ENCODE measurements at regions of chr18 and their contacts with region 1.

Region 1: DNA sequence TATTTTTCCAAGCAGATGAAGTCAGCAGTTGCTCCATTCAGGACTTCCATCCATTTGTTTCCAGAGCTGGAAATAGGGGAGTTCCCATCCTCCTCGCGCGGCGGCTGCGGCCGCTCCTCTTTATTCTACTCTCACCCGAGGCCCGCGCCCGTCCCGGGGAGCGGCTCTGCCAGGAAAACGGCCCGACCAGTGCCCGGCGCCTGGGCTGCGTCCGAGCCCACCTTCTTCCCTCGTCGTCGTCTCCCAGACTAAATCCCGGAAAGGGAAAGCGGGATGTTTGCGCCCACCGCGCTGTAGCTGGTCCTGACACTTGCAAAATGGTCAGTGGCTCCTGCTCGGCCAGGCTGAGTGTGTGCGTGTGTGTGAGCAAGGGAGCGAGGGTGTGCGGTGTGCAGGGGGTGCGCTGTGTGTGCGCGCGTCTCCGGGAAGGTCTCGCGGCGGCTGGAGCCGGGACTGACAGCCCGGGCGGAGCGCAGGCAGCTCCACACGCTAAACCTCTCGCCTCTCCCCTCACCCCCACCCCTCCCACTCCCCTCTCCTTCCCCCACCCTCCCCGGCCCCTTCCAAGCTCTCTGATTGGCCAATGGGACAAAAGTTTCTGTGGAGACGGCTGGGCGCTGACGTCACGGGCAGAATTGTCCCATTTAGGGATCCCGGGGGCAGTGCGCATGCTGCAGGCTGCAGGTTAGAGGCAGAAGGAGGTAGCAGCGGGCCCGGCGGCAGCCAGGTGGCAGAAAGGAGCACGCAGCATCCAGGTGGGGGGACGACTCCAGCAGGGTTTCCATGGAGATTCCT is at the start of gene NOL4:
- DNase-seq: peak; percentile 99
- ATAC-seq: peak; percentile 82
- H3K4me3 Mint-ChIP-seq: peak within 1 kb of the TSS; percentile 82
- H3K27ac Mint-ChIP-seq: no peak within 1 kb of the TSS
- H3K4me1 Mint-ChIP-seq: peaks cover 19% of the 10 kb centered on the region
- H3K27me3 Mint-ChIP-seq: peaks cover 51% of the 10 kb centered on the region
- CTCF ChIP-seq: 0 out of 2 replicates have a peak, but pooled peaks have one; percentile 32
- total RNA-seq, gene NOL4: 0.57 to 1.4 TPM (median 1.2 TPM) in 3 replicates

Region 2: DNA sequence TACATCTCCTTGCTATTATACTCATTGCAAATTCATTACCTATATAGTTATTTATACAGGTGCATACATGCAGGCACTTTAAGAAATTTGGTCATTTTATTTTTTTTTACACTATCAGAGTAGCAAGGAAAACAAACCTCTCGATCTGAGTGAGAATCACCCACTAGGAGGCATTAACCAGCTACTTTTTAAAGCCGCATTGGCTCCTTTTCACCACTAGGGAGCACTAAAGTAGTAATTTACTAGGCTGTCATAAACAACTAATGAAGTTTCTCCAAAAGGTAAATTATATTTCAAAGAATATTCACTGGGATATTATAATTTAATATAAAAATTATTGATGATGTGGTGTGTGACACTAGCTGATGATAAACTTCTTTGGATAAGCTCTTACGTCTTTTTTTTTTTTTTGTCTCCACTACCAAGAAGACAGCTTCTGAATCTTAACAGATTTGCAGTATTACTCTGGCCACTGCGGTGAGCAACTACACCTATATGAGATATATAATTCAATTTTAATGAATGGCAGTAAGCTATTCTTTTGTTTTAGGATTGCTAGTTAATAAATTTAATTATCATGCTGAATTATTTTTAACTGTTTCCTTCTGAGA is 101.8 kb before region 1 on chr18:
- CTCF ChIA-PET with region 1: interaction called, 34 read pairs
- POLR2A ChIA-PET with region 1: no interaction called
- DNase-seq: peak; percentile 21
- ATAC-seq: peak; percentile 73
- H3K4me3 Mint-ChIP-seq: no peak overlapping the region
- H3K27ac Mint-ChIP-seq: no peak overlapping the region
- H3K4me1 Mint-ChIP-seq: no peaks in the 10 kb centered on the region
- H3K27me3 Mint-ChIP-seq: peaks cover 42% of the 10 kb centered on the region
- CTCF ChIP-seq: peak; percentile 70

Region 3: DNA sequence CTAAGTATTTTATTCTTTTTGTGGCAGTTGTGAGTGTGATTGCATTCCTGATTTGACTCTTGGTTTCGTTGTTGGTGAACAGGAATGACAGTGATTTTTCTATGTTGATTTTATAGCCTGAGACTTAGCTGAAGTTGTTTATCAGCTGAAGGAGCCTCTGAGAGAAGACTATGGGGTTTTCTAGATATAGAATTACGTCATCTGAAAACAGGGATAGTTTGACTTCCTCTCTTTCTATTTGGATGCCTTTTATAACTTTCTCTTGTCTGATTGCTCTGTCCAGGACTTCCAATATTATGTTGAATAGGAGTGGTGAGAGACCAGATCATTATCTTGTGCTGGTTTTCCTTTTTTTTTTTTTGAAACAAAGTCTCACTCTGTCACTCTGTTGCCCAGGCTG is 18.1 kb after region 1 on chr18:
- CTCF ChIA-PET with region 1: interaction called, 11 read pairs
- POLR2A ChIA-PET with region 1: no interaction called
- DNase-seq: no peak
- ATAC-seq: no peak
- H3K4me3 Mint-ChIP-seq: no peak overlapping the region
- H3K27ac Mint-ChIP-seq: no peak overlapping the region
- H3K4me1 Mint-ChIP-seq: peaks cover 7% of the 10 kb centered on the region
- H3K27me3 Mint-ChIP-seq: no peaks in the 10 kb centered on the region
- CTCF ChIP-seq: no peak

Region 4: GRCh38 chr18:34315953-34316352 is 91.3 kb after region 1 on chr18:
- CTCF ChIA-PET with region 1: interaction called, 39 read pairs
- POLR2A ChIA-PET with region 1: no interaction called
- DNase-seq: no peak
- ATAC-seq: no peak
- H3K4me3 Mint-ChIP-seq: no peak overlapping the region
- H3K27ac Mint-ChIP-seq: no peak overlapping the region
- H3K4me1 Mint-ChIP-seq: 0 out of 2 replicates have a peak, but pooled peaks cover 3% of the 10 kb centered on the region
- H3K27me3 Mint-ChIP-seq: no peaks in the 10 kb centered on the region
- CTCF ChIP-seq: no peak

Region 5: DNA sequence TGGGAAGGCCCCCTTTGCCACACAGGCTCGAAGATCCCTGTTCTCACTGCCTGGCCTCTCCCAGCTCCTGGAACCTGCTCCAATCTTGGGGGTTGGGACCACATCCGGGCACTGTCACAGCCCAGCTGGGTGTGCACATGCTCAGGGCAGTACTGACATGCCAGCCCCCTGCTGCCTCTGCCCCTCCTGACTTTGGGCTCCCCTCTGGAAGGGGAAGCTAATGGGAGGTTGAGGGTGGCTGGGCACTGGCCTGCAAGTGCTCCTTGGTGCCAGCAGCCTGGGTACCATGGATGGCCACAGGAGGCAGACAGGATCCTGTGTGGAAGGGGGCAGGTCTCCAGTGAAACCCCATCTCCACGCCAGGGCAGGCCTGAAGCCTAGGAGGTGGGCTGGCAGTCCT is 126.2 kb after region 1 on chr18:
- CTCF ChIA-PET with region 1: no interaction called
- POLR2A ChIA-PET with region 1: no interaction called
- DNase-seq: no peak
- ATAC-seq: no peak
- H3K4me3 Mint-ChIP-seq: no peak overlapping the region
- H3K27ac Mint-ChIP-seq: no peak overlapping the region
- H3K4me1 Mint-ChIP-seq: no peaks in the 10 kb centered on the region
- H3K27me3 Mint-ChIP-seq: no peaks in the 10 kb centered on the region; the same call in 1 of the 2 replicates
- CTCF ChIP-seq: no peak

Region 6: GRCh38 chr18:34548118-34548972 is 323.7 kb after region 1 on chr18:
- CTCF ChIA-PET with region 1: interaction called, 12 read pairs
- POLR2A ChIA-PET with region 1: no interaction called
- DNase-seq: no peak
- ATAC-seq: peak; percentile 89
- H3K4me3 Mint-ChIP-seq: peak overlapping the region; percentile 44
- H3K27ac Mint-ChIP-seq: peak overlapping the region; percentile 81
- H3K4me1 Mint-ChIP-seq: peaks cover 77% of the 10 kb centered on the region
- H3K27me3 Mint-ChIP-seq: no peaks in the 10 kb centered on the region
- CTCF ChIP-seq: no peak

Measured in WTC11 (cell line).